Brain microvascular endothelial cell (primary cell): ENCODE measurements at regions of chr3 and their contacts with region 1.

Region 1: GRCh38 chr3:153052096-153052460 is 109.9 kb upstream of the RAP2B start:
- DNase-seq: peak; percentile 95
- H3K4me3 ChIP-seq: no peak overlapping the region
- H3K27ac ChIP-seq: peak overlapping the region; percentile 85
- H3K27me3 ChIP-seq: no peaks in the 10 kb centered on the region
- CTCF ChIP-seq: no peak

Region 2: GRCh38 chr3:153161138-153161713 is 109.1 kb after region 1 on chr3:
- in situ Hi-C with region 1: loop called (anchors 25 kb)
- DNase-seq: peak; percentile 100
- H3K4me3 ChIP-seq: peak overlapping the region; percentile 95
- H3K27ac ChIP-seq: peak overlapping the region; percentile 79
- H3K27me3 ChIP-seq: no peaks in the 10 kb centered on the region
- CTCF ChIP-seq: no peak

Region 3: DNA sequence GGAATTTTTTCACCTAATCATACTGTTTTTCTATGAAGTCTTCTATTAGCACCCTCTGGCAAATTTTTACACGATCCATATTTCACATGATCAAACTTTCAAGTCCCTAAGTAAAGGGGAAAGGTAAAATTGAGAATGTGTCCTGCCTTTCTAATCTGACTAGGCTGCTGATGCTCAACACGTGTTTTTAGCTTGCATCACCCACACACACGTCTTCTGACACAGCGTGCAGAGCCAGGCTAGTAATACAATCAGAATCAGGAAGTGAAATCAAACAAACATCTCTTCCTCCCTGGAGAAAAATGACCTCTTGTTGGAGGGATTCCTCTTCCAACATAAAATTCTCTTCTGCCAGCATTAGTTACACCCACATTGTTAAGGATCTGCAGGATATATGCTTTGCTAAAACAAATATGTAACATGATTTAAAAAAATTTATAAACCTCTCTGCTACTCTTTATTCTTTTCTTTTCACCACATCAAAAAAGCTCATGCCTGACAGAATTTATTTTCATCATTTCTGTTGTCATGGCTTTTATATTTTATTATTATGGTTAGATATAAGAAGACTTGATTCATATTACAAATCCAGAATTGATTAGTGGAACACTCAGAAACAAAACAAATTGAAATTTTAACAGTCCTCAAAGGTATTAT is 232.3 kb after region 1 on chr3:
- in situ Hi-C with region 1: loop called (anchors 25 kb)
- DNase-seq: peak; percentile 92
- H3K4me3 ChIP-seq: no peak overlapping the region
- H3K27ac ChIP-seq: peak overlapping the region; percentile 77
- H3K27me3 ChIP-seq: no peaks in the 10 kb centered on the region
- CTCF ChIP-seq: no peak